ENCODE measurements at regions of chr1 and their contacts with region 1.

Region 1: GRCh38 chr1:89719502-89720306 is 86.8 kb downstream of the LRRC8C start:
- DNase-seq: peak; percentile 80
- ATAC-seq: peak; percentile 92
- H3K4me3 ChIP-seq: 0 out of 2 replicates have a peak overlapping the region, but pooled peaks have one; percentile 19
- H3K27ac ChIP-seq: 0 out of 2 replicates have a peak overlapping the region, but pooled peaks have one; percentile 4
- H3K4me1 ChIP-seq: peaks cover 28% of the 10 kb centered on the region
- H3K27me3 ChIP-seq: no peaks in the 10 kb centered on the region
- CTCF ChIP-seq: no peak
- EP300 ChIP-seq: peak; percentile 64 to 88; a peak in 2 of 4 replicates
- POLR2A ChIP-seq: no peak
- RAD21 ChIP-seq: peak; percentile 9; the same call in 1 of the 2 replicates

Region 2: GRCh38 chr1:89615676-89616598 is 103.8 kb before region 1 on chr1:
- CTCF ChIA-PET with region 1: interaction called, 4 read pairs
- POLR2A ChIA-PET with region 1: no interaction called
- RAD21 ChIA-PET with region 1: no interaction called
- SMC1A ChIA-PET with region 1: interaction called, 10 read pairs
- in situ Hi-C with region 1: no loop called
- intact Hi-C with region 1: no loop called
- DNase-seq: no peak
- ATAC-seq: peak; percentile 37
- H3K4me3 ChIP-seq: no peak overlapping the region
- H3K27ac ChIP-seq: no peak overlapping the region
- H3K4me1 ChIP-seq: peaks cover 14% of the 10 kb centered on the region
- H3K27me3 ChIP-seq: no peaks in the 10 kb centered on the region
- CTCF ChIP-seq: peak; percentile 15 to 52 (median 37); a peak in 4 of 6 replicates
- EP300 ChIP-seq: no peak
- POLR2A ChIP-seq: no peak
- RAD21 ChIP-seq: 0 out of 2 replicates have a peak, but pooled peaks have one; percentile 8

Region 3: GRCh38 chr1:89670163-89670562 is 49.5 kb before region 1 on chr1:
- CTCF ChIA-PET with region 1: interaction called, 8 read pairs
- POLR2A ChIA-PET with region 1: interaction called, 8 read pairs
- RAD21 ChIA-PET with region 1: interaction called, 42 read pairs
- SMC1A ChIA-PET with region 1: interaction called, 37 read pairs
- in situ Hi-C with region 1: no loop called
- intact Hi-C with region 1: no loop called
- DNase-seq: peak; percentile 94
- ATAC-seq: peak; percentile 93
- H3K4me3 ChIP-seq: no peak overlapping the region; the same call in 1 of the 2 replicates
- H3K27ac ChIP-seq: peak overlapping the region; percentile 72
- H3K4me1 ChIP-seq: peaks cover 37% of the 10 kb centered on the region
- H3K27me3 ChIP-seq: no peaks in the 10 kb centered on the region
- CTCF ChIP-seq: no peak
- EP300 ChIP-seq: peak; percentile 98
- POLR2A ChIP-seq: no peak
- RAD21 ChIP-seq: no peak

Region 4: DNA sequence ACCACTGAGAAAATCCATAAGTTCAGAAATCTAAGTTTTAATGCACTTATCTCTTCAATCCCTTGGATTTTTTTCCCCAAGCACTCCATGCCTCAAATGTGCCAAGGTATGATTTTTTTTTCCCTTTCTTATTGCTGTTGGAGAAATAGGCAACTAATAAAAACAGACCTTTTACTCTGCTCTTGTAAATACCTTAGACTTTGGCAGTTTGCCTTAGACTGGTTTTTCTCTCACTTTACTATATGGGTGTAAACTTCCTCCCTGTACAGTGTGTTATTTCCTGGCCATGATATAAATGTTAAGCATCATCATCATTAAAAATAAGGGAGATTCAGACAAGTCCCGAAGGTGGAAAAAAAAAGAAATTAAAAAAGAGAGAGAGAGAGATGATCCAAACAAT is 21.1 kb before region 1 on chr1:
- CTCF ChIA-PET with region 1: interaction called, 10 read pairs
- POLR2A ChIA-PET with region 1: interaction called, 20 read pairs
- RAD21 ChIA-PET with region 1: interaction called, 42 read pairs
- SMC1A ChIA-PET with region 1: interaction called, 70 read pairs
- in situ Hi-C with region 1: no loop called
- intact Hi-C with region 1: no loop called
- DNase-seq: no peak
- ATAC-seq: no peak
- H3K4me3 ChIP-seq: no peak overlapping the region
- H3K27ac ChIP-seq: no peak overlapping the region; the same call in 1 of the 2 replicates
- H3K4me1 ChIP-seq: peaks cover 22% of the 10 kb centered on the region
- H3K27me3 ChIP-seq: no peaks in the 10 kb centered on the region
- CTCF ChIP-seq: no peak
- EP300 ChIP-seq: no peak
- POLR2A ChIP-seq: no peak
- RAD21 ChIP-seq: no peak

Region 5: DNA sequence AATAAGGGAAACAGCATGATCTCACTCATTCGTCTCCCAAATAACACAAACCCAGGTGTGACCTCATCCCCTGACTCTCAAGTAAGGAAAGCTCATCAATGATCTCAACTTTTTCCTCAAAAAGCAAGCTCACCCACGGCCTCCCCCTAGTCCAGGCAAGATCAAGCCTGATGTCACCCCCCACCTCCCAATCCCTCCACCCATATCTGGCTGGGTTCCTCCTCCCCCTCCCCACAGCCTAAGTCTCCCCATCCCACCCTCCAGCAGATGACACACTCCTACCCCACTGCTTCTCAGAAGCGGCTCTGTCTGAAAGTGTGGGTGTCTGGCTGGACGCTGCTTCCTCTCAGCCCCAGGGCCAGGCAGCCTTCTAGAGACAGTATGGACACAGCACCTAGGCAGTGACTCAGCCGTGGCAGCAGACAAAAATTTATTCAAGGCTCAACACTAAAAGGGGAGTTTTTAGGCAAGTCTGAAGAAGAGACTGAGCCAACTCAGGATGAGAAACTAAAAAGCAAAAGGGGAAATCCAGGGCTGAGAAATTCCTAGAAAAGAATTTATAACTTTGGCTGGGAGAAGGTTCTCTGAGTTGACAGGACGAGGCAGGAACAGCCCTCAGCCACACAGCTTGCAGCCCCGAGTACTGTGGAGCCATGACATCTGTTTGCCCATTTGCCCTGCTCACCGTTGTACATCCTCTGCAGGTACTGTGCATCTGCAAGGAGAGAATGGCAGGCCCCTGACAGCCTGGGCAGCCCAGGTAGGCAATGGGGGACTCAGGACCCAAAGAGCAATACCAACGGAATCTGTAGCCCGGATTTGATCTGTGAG is 19.5 kb after region 1 on chr1:
- CTCF ChIA-PET with region 1: interaction called, 5 read pairs
- POLR2A ChIA-PET with region 1: interaction called, 3 read pairs
- RAD21 ChIA-PET with region 1: interaction called, 3 read pairs
- SMC1A ChIA-PET with region 1: interaction called, 12 read pairs
- in situ Hi-C with region 1: no loop called
- intact Hi-C with region 1: no loop called
- DNase-seq: no peak
- ATAC-seq: peak; percentile 91
- H3K4me3 ChIP-seq: no peak overlapping the region
- H3K27ac ChIP-seq: no peak overlapping the region
- H3K4me1 ChIP-seq: peaks cover 10% of the 10 kb centered on the region
- H3K27me3 ChIP-seq: no peaks in the 10 kb centered on the region
- CTCF ChIP-seq: no peak
- EP300 ChIP-seq: no peak
- POLR2A ChIP-seq: no peak
- RAD21 ChIP-seq: no peak

Measured in GM12878 (cell line).